ENCODE measurements at regions of chr14 and their contacts with region 1.

Region 1: GRCh38 chr14:76812211-76813044 is at the start of gene ANGEL1:
- DNase-seq: peak; percentile 86 to 98
- H3K4me3 ChIP-seq: peak within 1 kb of the TSS; percentile 76 to 88
- H3K27ac ChIP-seq: peak within 1 kb of the TSS; percentile 74 to 79
- H3K4me1 ChIP-seq: peaks cover 0 to 6% of the 10 kb centered on the region in 2 donors
- H3K27me3 ChIP-seq: no peaks in the 10 kb centered on the region
- CTCF ChIP-seq: no peak
- total RNA-seq, gene ANGEL1: 15.5 TPM

Region 2: GRCh38 chr14:76701981-76702380 is 110.4 kb before region 1 on chr14:
- intact Hi-C with region 1: loop called (anchors 2 kb)
- DNase-seq: peak; percentile 82 to 96
- H3K4me3 ChIP-seq: no peak overlapping the region
- H3K27ac ChIP-seq: peak overlapping the region; percentile 61 to 85
- H3K4me1 ChIP-seq: peaks cover 20 to 38% of the 10 kb centered on the region in 2 donors
- H3K27me3 ChIP-seq: no peaks in the 10 kb centered on the region
- CTCF ChIP-seq: no peak

Region 3: DNA sequence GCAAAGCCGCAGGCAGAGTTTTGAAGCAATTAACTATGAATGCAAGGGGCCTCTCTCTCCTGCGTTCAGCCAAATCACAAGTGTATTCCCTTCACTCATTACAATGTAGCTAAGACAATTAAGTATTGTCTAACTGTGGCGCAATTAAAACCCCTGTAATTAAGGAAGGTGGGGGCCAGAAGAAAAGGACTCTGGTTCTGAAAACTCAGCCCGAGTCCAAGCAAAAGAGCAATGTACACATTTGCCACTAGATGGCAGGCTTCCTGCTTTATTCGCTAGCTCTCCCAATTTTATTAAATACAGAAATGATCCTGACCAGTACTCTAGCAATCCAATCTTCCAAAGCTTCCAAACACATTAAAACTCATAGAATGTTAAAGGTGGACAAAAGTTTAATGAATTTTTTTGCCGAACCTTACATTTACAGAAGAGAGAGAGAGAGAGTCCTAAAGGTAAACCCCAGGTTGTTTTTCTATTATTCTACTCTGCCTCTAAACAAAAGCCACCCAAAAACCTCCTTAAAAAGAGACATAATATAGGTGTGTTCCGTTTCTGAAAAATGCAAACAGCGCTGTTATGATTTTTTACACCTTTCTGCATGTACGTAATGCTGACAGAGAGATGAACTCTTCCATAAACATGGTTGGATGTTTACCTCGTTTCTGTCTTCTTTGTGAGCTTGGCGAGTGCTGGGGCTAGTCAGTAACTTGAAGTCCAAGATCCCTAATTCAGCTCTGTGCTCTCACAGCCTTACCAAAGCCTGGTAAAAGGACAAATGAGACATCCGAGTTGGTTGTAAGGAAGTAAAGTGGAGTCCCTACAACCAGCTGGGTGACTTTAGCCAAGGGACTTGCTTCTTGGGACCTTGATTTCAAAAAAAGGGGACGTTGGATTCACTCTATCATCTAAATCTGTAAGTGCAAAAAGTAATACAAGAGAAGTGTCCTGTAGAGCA is 102.1 kb before region 1 on chr14:
- intact Hi-C with region 1: loop called (anchors 2 kb)
- DNase-seq: peak in 1 of 2 donors; percentile 57
- H3K4me3 ChIP-seq: no peak overlapping the region
- H3K27ac ChIP-seq: no peak overlapping the region
- H3K4me1 ChIP-seq: no peaks in the 10 kb centered on the region
- H3K27me3 ChIP-seq: no peaks in the 10 kb centered on the region
- CTCF ChIP-seq: peak; percentile 62 to 70 (median 66)

Region 4: GRCh38 chr14:76761136-76761959 is 51.1 kb before region 1 on chr14 and contains the start of gene VASH1:
- intact Hi-C with region 1: loop called (anchors 5 kb)
- DNase-seq: no peak
- H3K4me3 ChIP-seq: peak within 1 kb of the TSS; percentile 84 to 88
- H3K27ac ChIP-seq: peak within 1 kb of the TSS; percentile 74 to 76
- H3K4me1 ChIP-seq: peaks cover 10 to 11% of the 10 kb centered on the region in 2 donors
- H3K27me3 ChIP-seq: no peaks in the 10 kb centered on the region
- CTCF ChIP-seq: no peak
- total RNA-seq, gene VASH1: 28.4 TPM

Region 5: GRCh38 chr14:76784266-76785264 is 27.9 kb before region 1 on chr14:
- intact Hi-C with region 1: loop called (anchors 2 kb)
- DNase-seq: peak in 1 of 2 donors; percentile 92
- H3K4me3 ChIP-seq: no peak overlapping the region
- H3K27ac ChIP-seq: peak overlapping the region; percentile 40 to 59
- H3K4me1 ChIP-seq: peaks cover 0 to 10% of the 10 kb centered on the region in 2 donors
- H3K27me3 ChIP-seq: no peaks in the 10 kb centered on the region
- CTCF ChIP-seq: peak; percentile 83 to 92 (median 89)

Measured in ascending aorta (tissue), 2 donors.